ENCODE measurements at regions of chr12 and their contacts with region 1.

Region 1: GRCh38 chr12:18250313-18250916 is 10.9 kb upstream of the PIK3C2G start:
- DNase-seq: no peak
- H3K4me3 ChIP-seq: no peak overlapping the region
- H3K27ac ChIP-seq: no peak overlapping the region
- H3K4me1 ChIP-seq: peaks cover 0 to 15% (median 0%) of the 10 kb centered on the region in 3 donors
- H3K27me3 ChIP-seq: no peaks in the 10 kb centered on the region
- CTCF ChIP-seq: peak; percentile 18 to 81 (median 66)
- POLR2A ChIP-seq: no peak

Region 2: GRCh38 chr12:18270958-18271460 is 20.6 kb after region 1 on chr12:
- intact Hi-C with region 1: no loop called
- DNase-seq: no peak
- H3K4me3 ChIP-seq: no peak overlapping the region
- H3K27ac ChIP-seq: peak overlapping the region in 1 of 4 donors; percentile 6
- H3K4me1 ChIP-seq: peaks cover 0 to 30% (median 0%) of the 10 kb centered on the region in 3 donors
- H3K27me3 ChIP-seq: no peaks in the 10 kb centered on the region
- CTCF ChIP-seq: no peak
- POLR2A ChIP-seq: no peak

Region 3: DNA sequence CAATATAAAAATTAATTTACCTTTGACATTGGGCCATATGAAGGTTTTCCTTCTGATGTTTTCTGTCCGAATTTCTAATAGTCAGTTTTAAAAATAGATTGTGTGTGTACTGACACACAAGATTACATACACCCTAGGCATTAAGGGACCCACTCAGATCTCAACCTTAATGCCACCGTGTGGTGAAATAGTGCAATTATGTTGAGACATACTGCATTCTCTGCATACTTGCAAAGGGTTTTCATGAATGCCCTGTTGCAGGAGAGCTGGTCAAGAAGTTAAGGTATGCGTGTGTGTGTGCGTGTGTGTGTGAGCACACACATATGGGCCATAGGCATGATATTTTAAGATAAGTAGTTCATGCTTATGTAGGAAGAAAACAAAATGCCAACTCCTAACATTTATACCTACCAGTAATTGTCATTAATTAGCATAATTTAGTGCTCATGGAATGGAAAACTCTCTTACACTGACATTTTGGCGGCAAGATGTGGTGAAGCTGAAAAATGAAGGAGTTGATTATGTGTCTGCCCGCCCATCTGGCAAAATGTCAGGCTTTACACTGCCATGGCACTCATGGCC is 69.7 kb after region 1 on chr12:
- intact Hi-C with region 1: loop called (anchors 10 kb)
- DNase-seq: no peak
- H3K4me3 ChIP-seq: no peak overlapping the region
- H3K27ac ChIP-seq: no peak overlapping the region
- H3K4me1 ChIP-seq: no peaks in the 10 kb centered on the region
- H3K27me3 ChIP-seq: no peaks in the 10 kb centered on the region
- CTCF ChIP-seq: peak in 5 of 6 experiments; percentile 43 to 68 (median 49)
- POLR2A ChIP-seq: no peak

Measured in esophagus squamous epithelium (tissue), 5 donors.